A549 (cell line): ENCODE measurements at regions of chr2 and their contacts with region 1.

Region 1: GRCh38 chr2:26764078-26764887 is at the start of gene SLC35F6:
- DNase-seq: peak; percentile 86 to 88
- ATAC-seq: peak; percentile 92 to 93
- H3K4me3 ChIP-seq: peak within 1 kb of the TSS; percentile 96
- H3K27ac ChIP-seq: peak within 1 kb of the TSS; percentile 95 to 96
- H3K4me1 ChIP-seq: peaks cover 52% of the 10 kb centered on the region
- CTCF ChIP-seq: no peak
- EP300 ChIP-seq: no peak
- POLR2A ChIP-seq: peak; percentile 79
- RAD21 ChIP-seq: no peak
- polyA plus RNA-seq, gene SLC35F6: 41.3 and 55.7 TPM in 2 replicates

Region 2: GRCh38 chr2:26724004-26724750 is 40.1 kb before region 1 on chr2:
- CTCF ChIA-PET with region 1: no interaction called
- POLR2A ChIA-PET with region 1: no interaction called
- DNase-seq: peak; percentile 89 to 98
- ATAC-seq: peak; percentile 39 to 67
- H3K4me3 ChIP-seq: 0 out of 3 replicates have a peak overlapping the region, but pooled peaks have one; percentile 4
- H3K27ac ChIP-seq: peak overlapping the region; percentile 94
- H3K4me1 ChIP-seq: peaks cover 79% of the 10 kb centered on the region
- CTCF ChIP-seq: no peak
- EP300 ChIP-seq: peak; percentile 92 to 96; a peak in 4 of 5 replicates
- POLR2A ChIP-seq: peak; percentile 27
- RAD21 ChIP-seq: peak in 1 of 2 experiments; percentile 50; a peak in 2 of 5 replicates

Region 3: GRCh38 chr2:26785431-26786206 is 21.3 kb after region 1 on chr2 and contains the start of gene CENPA:
- CTCF ChIA-PET with region 1: interaction called, 10 read pairs
- POLR2A ChIA-PET with region 1: interaction called, 14 read pairs
- DNase-seq: peak; percentile 100
- ATAC-seq: peak; percentile 95 to 99
- H3K4me3 ChIP-seq: peak within 1 kb of the TSS; percentile 94
- H3K27ac ChIP-seq: peak within 1 kb of the TSS; percentile 89 to 96
- H3K4me1 ChIP-seq: peaks cover 13% of the 10 kb centered on the region; the same call in 2 of the 3 replicates
- CTCF ChIP-seq: no peak
- EP300 ChIP-seq: no peak
- POLR2A ChIP-seq: peak; percentile 33; the same call in 1 of the 2 replicates
- RAD21 ChIP-seq: peak in 1 of 2 experiments; percentile 2; a peak in 1 of 5 replicates
- polyA plus RNA-seq, gene CENPA: 44.1 and 46.0 TPM in 2 replicates